ENCODE measurements at regions of chr17 and their contacts with region 1.

Region 1: GRCh38 chr17:57833179-57833939 is 16.5 kb downstream of the MRPS23 start:
- DNase-seq: peak; percentile 30
- H3K4me3 ChIP-seq: peak overlapping the region; percentile 59
- H3K27ac ChIP-seq: no peak overlapping the region
- H3K27me3 ChIP-seq: no peaks in the 10 kb centered on the region
- CTCF ChIP-seq: peak; percentile 94

Region 2: DNA sequence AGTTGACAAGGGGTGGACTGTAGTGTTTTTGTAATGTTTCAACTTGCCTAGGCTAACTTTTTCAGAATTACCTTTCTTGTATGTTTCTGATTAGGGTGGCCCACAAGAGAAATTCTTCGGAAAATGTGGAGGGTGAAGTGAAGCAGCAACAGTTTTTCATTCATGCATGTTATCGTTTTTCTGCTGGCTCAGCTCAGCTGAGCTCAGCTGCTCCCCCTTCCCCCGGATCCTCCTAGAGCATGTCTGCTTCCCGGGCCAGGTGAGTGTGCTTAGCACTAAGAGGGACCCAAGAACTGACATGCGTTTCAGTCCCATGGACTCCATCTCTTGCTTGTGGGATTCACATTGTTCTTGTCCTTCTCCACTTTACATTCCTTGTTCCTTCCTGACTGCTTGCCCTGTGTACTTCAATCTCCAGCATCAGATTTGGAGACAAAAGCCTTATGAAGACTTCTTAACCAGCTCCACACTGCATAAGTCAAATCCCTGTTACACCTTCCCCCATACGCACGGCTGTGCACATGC is 821.8 kb before region 1 on chr17:
- CTCF ChIA-PET with region 1: interaction called, 3 read pairs
- POLR2A ChIA-PET with region 1: interaction called, 12 read pairs
- DNase-seq: no peak
- H3K4me3 ChIP-seq: no peak overlapping the region
- H3K27ac ChIP-seq: no peak overlapping the region
- H3K27me3 ChIP-seq: no peaks in the 10 kb centered on the region
- CTCF ChIP-seq: no peak

Region 3: DNA sequence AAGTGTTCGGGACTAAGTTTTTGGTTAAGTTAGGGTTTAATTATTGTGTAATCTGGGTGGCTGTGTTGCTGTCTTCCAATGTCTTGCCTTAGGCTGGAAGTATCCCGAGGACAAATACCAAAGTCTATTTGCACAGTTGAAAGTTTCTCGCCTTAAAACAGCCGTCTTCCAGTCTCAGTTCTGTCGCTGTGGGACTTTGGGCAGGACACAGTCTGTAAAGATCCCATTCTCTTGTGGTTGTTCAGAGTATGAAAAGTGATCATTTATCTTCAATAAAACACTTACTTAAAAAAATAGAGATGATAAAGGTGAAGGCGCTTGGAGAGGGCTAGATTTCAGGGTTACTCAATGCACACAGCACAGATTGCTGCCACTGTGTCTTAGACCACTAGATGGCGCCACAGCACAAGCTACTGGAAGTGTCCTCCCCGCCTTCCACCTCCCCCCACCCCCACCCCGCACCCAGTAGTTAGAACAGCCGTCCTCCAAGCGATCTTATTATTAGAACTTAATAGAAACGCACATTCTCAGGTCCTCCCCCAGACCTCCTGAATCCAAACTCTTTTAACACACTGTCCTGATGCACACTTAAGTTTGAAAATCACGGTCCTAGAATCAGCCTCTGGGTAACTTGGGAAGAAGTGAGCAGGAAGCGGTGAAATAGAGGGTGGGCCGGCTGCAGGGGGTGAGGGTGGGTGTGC is 702.4 kb before region 1 on chr17:
- CTCF ChIA-PET with region 1: interaction called, 62 read pairs
- POLR2A ChIA-PET with region 1: no interaction called
- DNase-seq: peak; percentile 46
- H3K4me3 ChIP-seq: peak overlapping the region; percentile 43
- H3K27ac ChIP-seq: no peak overlapping the region
- H3K27me3 ChIP-seq: peaks cover 8% of the 10 kb centered on the region
- CTCF ChIP-seq: peak; percentile 82

Region 4: GRCh38 chr17:57597531-57598453 is 235.6 kb before region 1 on chr17:
- CTCF ChIA-PET with region 1: interaction called, 31 read pairs
- POLR2A ChIA-PET with region 1: no interaction called
- DNase-seq: no peak
- H3K4me3 ChIP-seq: no peak overlapping the region
- H3K27ac ChIP-seq: peak overlapping the region; percentile 39
- H3K27me3 ChIP-seq: no peaks in the 10 kb centered on the region
- CTCF ChIP-seq: peak; percentile 96

Region 5: GRCh38 chr17:57747221-57748017 is 85.9 kb before region 1 on chr17:
- CTCF ChIA-PET with region 1: interaction called, 18 read pairs
- POLR2A ChIA-PET with region 1: no interaction called
- DNase-seq: peak; percentile 33
- H3K4me3 ChIP-seq: no peak overlapping the region
- H3K27ac ChIP-seq: no peak overlapping the region
- H3K27me3 ChIP-seq: peaks cover 26% of the 10 kb centered on the region
- CTCF ChIP-seq: peak; percentile 91

Region 6: GRCh38 chr17:57760046-57760445 is 73.3 kb before region 1 on chr17:
- CTCF ChIA-PET with region 1: no interaction called
- POLR2A ChIA-PET with region 1: no interaction called
- DNase-seq: no peak
- H3K4me3 ChIP-seq: no peak overlapping the region
- H3K27ac ChIP-seq: no peak overlapping the region
- H3K27me3 ChIP-seq: peaks cover 24% of the 10 kb centered on the region
- CTCF ChIP-seq: no peak

Region 7: DNA sequence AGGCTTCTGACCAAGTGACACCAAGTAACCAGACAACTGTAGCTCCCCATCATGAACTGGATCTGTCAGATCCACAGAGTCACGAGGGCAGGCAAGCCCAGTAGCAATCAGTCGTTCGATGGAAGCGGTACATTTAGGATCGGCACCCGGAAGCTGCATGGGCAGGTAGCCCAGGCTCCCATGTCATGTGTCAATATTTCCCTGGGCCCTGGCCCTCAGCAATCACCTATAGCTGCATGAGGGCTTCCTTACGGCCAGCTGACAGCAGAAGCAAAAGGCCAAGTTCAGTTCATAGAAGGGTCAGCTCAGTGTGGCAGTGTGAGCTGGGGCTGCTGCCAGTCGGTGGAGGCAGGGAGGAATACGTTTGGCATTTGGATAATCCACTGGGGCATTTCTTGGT is 15.3 kb before region 1 on chr17:
- CTCF ChIA-PET with region 1: interaction called, 42 read pairs
- POLR2A ChIA-PET with region 1: no interaction called
- DNase-seq: no peak
- H3K4me3 ChIP-seq: no peak overlapping the region
- H3K27ac ChIP-seq: no peak overlapping the region
- H3K27me3 ChIP-seq: peaks cover 16% of the 10 kb centered on the region
- CTCF ChIP-seq: no peak

Region 8: GRCh38 chr17:57914273-57915142 is 81.1 kb after region 1 on chr17:
- CTCF ChIA-PET with region 1: no interaction called
- POLR2A ChIA-PET with region 1: no interaction called
- DNase-seq: no peak
- H3K4me3 ChIP-seq: no peak overlapping the region
- H3K27ac ChIP-seq: no peak overlapping the region
- H3K27me3 ChIP-seq: no peaks in the 10 kb centered on the region
- CTCF ChIP-seq: no peak

Region 9: GRCh38 chr17:57995076-57995956 is 162.0 kb after region 1 on chr17:
- CTCF ChIA-PET with region 1: interaction called, 48 read pairs
- POLR2A ChIA-PET with region 1: no interaction called
- DNase-seq: peak; percentile 59
- H3K4me3 ChIP-seq: no peak overlapping the region
- H3K27ac ChIP-seq: no peak overlapping the region
- H3K27me3 ChIP-seq: no peaks in the 10 kb centered on the region
- CTCF ChIP-seq: peak; percentile 73